ENCODE measurements at regions of chr6 and their contacts with region 1.

Region 1: GRCh38 chr6:12483712-12484111 is 193.6 kb downstream of the EDN1 start:
- DNase-seq: peak; percentile 76
- H3K4me3 Mint-ChIP-seq: peak overlapping the region; percentile 35
- H3K27ac Mint-ChIP-seq: peak overlapping the region; percentile 47
- H3K4me1 Mint-ChIP-seq: peaks cover 25% of the 10 kb centered on the region
- H3K27me3 Mint-ChIP-seq: no peaks in the 10 kb centered on the region
- CTCF ChIP-seq: no peak

Region 2: GRCh38 chr6:12472601-12473038 is 11.1 kb before region 1 on chr6:
- CTCF ChIA-PET with region 1: interaction called, 3 read pairs
- POLR2A ChIA-PET with region 1: interaction called, 10 read pairs
- intact Hi-C with region 1: no loop called
- DNase-seq: peak; percentile 96
- H3K4me3 Mint-ChIP-seq: no peak overlapping the region
- H3K27ac Mint-ChIP-seq: peak overlapping the region; percentile 49
- H3K4me1 Mint-ChIP-seq: peaks cover 41% of the 10 kb centered on the region
- H3K27me3 Mint-ChIP-seq: no peaks in the 10 kb centered on the region
- CTCF ChIP-seq: no peak